ENCODE measurements at regions of chr7 and their contacts with region 1.

Region 1: GRCh38 chr7:73342645-73343044 is 14.7 kb downstream of the FKBP6 start:
- DNase-seq: no peak
- H3K4me3 ChIP-seq: peak overlapping the region in 3 of 4 donors; percentile 16 to 29 (median 19)
- H3K27ac ChIP-seq: no peak overlapping the region
- H3K4me1 ChIP-seq: peaks cover 0 to 12% (median 7%) of the 10 kb centered on the region in 4 donors
- H3K27me3 ChIP-seq: peaks cover 0 to 18% (median 0%) of the 10 kb centered on the region in 4 donors
- CTCF ChIP-seq: peak; percentile 44 to 57 (median 49)
- EP300 ChIP-seq: no peak
- POLR2A ChIP-seq: no peak

Region 2: DNA sequence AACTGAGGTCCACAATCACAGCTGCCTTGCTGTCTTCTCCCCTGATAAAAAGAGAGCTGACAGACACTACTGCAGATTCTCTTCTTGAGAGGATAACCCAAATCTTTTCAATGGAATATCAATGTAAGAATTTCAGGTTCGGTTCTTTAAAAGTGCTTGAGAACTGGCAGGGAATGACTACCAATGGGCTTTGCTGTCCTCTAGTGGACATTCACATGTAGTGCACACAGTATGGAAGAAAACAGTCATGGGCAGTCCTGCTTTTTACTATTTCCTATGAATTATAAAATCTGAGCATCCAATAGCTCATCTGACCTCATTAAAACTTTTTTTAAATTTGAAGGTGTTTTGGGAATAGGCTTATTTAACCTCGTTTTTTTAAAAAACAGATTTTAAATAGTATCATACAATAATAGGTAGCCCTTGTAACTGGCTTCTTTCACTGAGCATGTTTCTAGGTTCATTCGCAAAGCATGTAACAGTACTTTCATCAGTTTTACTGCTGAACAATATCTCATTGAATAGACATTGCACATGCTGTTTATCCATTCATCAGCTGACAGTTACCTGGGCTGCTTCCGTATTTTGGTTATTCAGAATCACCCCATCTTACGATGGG is 109.2 kb after region 1 on chr7:
- intact Hi-C with region 1: loop called (anchors 5 kb)
- DNase-seq: no peak
- H3K4me3 ChIP-seq: no peak overlapping the region
- H3K27ac ChIP-seq: no peak overlapping the region
- H3K4me1 ChIP-seq: peaks cover 5 to 32% (median 23%) of the 10 kb centered on the region in 4 donors
- H3K27me3 ChIP-seq: no peaks in the 10 kb centered on the region
- CTCF ChIP-seq: peak; percentile 94 to 99 (median 96)
- EP300 ChIP-seq: no peak
- POLR2A ChIP-seq: no peak

Measured in esophagus muscularis mucosa (tissue), 4 donors.